Activated CD4-positive, alpha-beta T cell treated with anti-CD3 and anti-CD28 coated beads, Interleukin-2, amount 10 ng/mL, durations not matched to agents 24 days and 14 days (primary cell): ENCODE measurements at regions of chr6 and their contacts with region 1.

Region 1: GRCh38 chr6:87701676-87702588 is at the start of gene AKIRIN2:
- DNase-seq: peak; percentile 99
- H3K4me3 Mint-ChIP-seq: peak within 1 kb of the TSS; percentile 97
- H3K27ac Mint-ChIP-seq: peak within 1 kb of the TSS; percentile 97
- H3K4me1 Mint-ChIP-seq: peaks cover 31% of the 10 kb centered on the region
- H3K27me3 Mint-ChIP-seq: no peaks in the 10 kb centered on the region
- total RNA-seq, gene AKIRIN2: 39.6 and 43.8 TPM in 2 replicates

Region 2: DNA sequence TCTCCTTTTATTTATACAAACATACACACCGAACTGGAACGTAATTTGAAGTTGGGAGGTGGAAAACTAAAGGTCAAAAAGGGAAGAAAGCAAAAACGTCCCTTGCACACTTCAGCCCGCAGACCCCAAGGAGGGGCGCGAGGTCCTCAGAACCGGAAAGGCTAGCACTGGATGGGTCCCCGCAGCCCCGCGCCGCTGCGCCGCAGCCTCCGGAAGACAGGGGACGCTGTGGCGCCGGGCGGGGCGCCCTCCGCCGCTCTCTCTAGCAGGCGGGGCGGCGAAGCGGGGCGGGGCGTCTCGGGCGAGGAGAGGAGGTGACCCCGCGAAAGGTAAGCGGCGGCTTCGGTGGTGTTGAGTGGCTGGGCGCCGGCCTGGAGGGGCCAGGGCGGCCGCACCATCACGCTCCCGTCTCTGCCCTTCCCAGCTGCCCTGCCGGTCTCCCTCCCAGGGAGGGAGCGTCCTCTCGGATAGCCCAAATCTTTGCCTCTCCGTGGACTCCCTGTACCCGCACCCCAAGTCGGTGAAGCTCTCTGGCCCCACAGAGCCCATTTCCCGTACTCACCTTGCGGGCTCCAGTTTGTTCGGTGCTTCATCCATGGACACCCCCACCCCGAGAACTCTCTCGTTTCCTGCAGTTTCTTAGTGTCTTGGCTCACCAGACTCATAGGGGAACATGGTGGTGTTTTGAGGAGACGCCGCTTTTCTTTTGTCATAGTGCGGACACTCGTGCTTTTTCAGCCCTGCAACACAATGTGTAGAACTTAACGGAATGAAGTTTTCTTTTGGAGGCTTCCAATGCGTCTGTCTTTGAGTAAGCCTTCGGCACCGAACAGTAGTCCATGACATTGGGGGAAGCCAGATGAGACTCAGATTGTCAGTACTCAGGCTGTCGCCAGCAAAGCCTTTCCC is 379.4 kb before region 1 on chr6 and contains the start of gene SMIM8:
- intact Hi-C with region 1: loop called (anchors 5 kb)
- DNase-seq: peak; percentile 97
- H3K4me3 Mint-ChIP-seq: peak within 1 kb of the TSS; percentile 99
- H3K27ac Mint-ChIP-seq: peak within 1 kb of the TSS; percentile 91
- H3K4me1 Mint-ChIP-seq: peaks cover 11% of the 10 kb centered on the region
- H3K27me3 Mint-ChIP-seq: peaks cover 8% of the 10 kb centered on the region
- total RNA-seq, gene SMIM8: 8.1 and 10.5 TPM in 2 replicates

Region 3: GRCh38 chr6:87472525-87473418 is 229.2 kb before region 1 on chr6 and contains the start of gene SLC35A1:
- intact Hi-C with region 1: loop called (anchors 1 kb)
- DNase-seq: peak; percentile 96
- H3K4me3 Mint-ChIP-seq: peak within 1 kb of the TSS; percentile 95
- H3K27ac Mint-ChIP-seq: peak within 1 kb of the TSS; percentile 97
- H3K4me1 Mint-ChIP-seq: peaks cover 17% of the 10 kb centered on the region
- H3K27me3 Mint-ChIP-seq: peaks cover 8% of the 10 kb centered on the region
- total RNA-seq, gene SLC35A1: 8.8 and 9.1 TPM in 2 replicates

Region 4: DNA sequence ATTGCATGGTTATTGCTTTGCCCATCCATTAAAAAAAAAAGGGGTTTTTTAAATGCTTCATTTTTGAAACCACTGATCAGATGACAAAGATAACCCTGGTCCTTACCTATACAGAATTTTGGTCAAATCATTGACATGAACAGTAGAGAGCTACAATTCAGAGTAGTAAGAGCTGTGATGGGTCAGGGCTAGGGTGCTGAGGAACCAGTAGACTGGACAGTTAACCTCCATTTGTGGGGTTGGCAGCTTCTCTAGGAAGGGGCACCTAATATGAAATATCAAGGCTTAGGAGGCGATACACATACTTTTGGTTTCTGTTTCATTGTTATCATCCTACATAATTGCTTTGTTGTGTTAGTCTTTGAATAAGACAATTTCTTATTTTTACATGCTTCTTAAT is 56.9 kb before region 1 on chr6:
- intact Hi-C with region 1: loop called (anchors 2 kb)
- DNase-seq: peak; percentile 68
- H3K4me3 Mint-ChIP-seq: peak overlapping the region; percentile 73
- H3K27ac Mint-ChIP-seq: peak overlapping the region; percentile 82
- H3K4me1 Mint-ChIP-seq: peaks cover 14% of the 10 kb centered on the region
- H3K27me3 Mint-ChIP-seq: no peaks in the 10 kb centered on the region

Region 5: DNA sequence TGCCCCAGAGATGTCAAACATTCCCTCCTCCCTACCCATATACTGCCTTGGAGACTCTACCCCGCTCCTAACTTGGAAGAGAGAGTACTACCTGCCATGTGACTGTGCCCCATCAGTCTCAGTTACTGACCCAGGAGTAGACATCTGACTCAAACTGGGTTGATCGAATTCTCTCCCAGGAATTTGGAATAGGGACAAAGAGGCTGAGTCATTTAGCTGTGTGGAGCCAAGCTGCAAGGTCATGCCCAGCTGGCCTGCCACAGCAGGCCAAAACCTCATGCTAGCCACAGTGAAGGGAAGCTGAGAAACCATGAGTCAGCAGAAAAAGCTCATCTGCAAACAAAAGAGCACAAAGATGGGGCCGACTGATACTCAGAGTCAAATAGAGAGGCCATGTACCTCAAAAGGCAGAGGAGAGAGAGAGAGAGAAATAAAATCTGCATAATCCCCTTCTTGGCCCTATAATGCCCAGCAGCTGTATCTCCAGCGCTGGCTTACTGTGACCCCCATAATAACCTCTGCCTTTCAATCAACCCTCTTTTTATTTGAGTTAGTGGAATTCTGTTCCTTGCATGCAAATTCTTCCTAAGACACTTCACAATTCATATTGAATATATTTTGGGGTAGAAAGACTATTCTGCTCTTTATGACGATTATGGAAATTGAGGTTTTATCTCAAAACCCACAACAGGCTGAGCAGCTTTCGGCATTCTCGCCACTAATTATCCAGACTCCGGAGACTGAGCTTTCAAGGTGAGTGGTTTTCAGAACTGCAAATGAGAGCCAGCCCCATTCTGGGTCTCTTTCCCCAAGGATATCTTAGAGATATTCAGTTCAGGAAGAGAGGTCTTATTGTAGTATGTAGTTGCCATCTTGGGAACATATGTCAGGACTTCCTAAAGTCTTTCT is 21.5 kb after region 1 on chr6:
- intact Hi-C with region 1: loop called (anchors 2 kb)
- DNase-seq: no peak
- H3K4me3 Mint-ChIP-seq: no peak overlapping the region
- H3K27ac Mint-ChIP-seq: no peak overlapping the region
- H3K4me1 Mint-ChIP-seq: peaks cover 17% of the 10 kb centered on the region
- H3K27me3 Mint-ChIP-seq: peaks cover under 1% of the 10 kb centered on the region

Region 6: GRCh38 chr6:87742106-87742505 is 40.2 kb after region 1 on chr6:
- intact Hi-C with region 1: loop called (anchors 1 kb)
- DNase-seq: peak; percentile 87
- H3K4me3 Mint-ChIP-seq: peak overlapping the region; percentile 5
- H3K27ac Mint-ChIP-seq: peak overlapping the region; percentile 73
- H3K4me1 Mint-ChIP-seq: peaks cover 30% of the 10 kb centered on the region
- H3K27me3 Mint-ChIP-seq: peaks cover 10% of the 10 kb centered on the region

Region 7: GRCh38 chr6:88072462-88072861 is 370.5 kb after region 1 on chr6:
- intact Hi-C with region 1: no loop called
- DNase-seq: no peak
- H3K4me3 Mint-ChIP-seq: no peak overlapping the region
- H3K27ac Mint-ChIP-seq: no peak overlapping the region
- H3K4me1 Mint-ChIP-seq: no peaks in the 10 kb centered on the region
- H3K27me3 Mint-ChIP-seq: no peaks in the 10 kb centered on the region

Region 8: DNA sequence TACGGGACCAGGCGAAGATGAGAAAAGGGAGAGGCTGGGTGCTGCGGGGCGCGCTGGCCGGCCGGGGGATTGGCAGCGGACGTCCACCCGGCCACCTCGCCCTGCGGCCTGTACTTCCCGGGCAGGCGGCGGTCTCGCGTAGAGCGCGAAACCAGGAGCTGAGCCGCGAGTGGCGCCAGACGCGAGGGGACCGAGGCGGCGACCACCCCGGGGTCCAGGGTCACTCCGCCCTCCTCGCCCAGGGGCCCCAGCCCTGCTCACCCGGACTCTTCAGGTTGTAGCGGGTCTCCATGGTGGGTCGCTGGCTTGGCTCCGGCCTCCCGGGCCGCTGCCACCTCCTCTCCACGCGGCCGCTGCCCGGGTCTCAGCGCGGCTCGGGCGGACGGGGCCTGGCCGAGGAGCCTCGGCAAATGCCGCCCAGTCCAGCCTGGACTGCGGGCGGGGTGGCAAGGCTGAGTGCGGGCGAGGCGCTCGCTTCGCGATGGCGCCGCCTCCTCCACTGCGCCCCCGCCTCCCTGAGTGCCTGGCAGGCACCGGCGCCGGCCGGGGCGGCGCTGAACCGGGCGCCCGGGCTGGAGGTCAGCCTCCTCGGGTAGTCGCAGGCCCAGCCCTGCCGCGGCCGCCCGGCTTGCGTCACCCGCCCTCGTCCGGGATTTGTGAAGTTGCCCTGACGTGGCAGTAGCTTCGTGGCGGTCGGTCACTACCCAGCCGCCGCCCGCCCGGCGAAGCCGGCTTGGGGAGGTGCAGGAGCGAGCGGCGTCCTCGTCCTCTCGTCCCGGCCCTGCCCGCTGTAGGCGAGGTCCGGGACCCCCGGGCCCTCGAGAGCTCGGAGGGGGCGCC is 1650.6 kb after region 1 on chr6 and contains the start of gene UBE2J1:
- intact Hi-C with region 1: loop called (anchors 5 kb)
- DNase-seq: peak; percentile 94
- H3K4me3 Mint-ChIP-seq: peak within 1 kb of the TSS; percentile 91
- H3K27ac Mint-ChIP-seq: peak within 1 kb of the TSS; percentile 94
- H3K4me1 Mint-ChIP-seq: peaks cover 66% of the 10 kb centered on the region
- H3K27me3 Mint-ChIP-seq: no peaks in the 10 kb centered on the region
- total RNA-seq, gene UBE2J1: 31.6 and 33.5 TPM in 2 replicates